PC-9 (cell line): ENCODE measurements at regions of chr11 and their contacts with region 1.

Region 1: DNA sequence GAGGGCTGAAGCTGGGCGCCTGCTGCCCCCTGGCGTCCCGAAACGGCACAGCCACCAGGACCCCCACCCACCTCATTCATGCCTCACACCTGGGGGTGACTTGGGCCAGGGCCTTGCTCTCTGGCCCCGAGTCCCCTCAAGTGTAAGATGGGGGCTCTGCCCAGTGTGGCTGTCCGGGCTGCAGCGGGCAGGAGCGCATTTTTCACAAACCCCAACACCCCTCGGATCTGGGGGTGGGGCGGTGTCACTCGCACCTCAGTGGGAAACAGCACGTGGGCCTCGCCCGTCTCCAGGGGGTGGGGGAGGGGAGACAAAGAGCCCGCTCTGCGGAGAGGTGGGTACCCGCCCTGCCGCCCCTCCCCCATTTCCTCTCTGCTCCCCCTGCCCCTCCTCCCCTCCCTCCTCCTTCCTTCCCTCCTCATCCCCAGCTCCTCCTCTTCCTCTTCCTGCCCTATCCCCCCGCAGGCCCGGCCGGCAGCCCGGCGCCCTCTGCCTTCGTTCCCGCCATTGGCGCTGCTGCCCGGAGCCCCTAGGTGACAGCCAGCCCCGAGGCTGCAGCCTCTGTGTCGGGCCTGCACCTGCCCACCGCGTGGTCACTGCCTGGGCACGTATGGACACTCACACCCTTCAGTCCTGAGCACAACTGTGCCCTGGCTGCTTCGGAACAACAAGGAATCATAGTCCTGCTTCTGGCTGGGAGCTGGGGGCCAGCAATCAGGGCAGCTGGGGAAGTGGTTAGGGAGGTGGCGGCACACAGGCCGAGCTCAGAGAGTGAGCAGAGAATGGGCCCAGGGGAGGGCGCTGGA is 6.8 kb upstream of the CDKN1C start:
- DNase-seq: peak; percentile 50 to 57
- H3K4me3 ChIP-seq: peak overlapping the region; percentile 62; the same call in 1 of the 2 replicates
- H3K27ac ChIP-seq: peak overlapping the region; percentile 63
- H3K4me1 ChIP-seq: peaks cover 8% of the 10 kb centered on the region; the same call in 1 of the 2 replicates
- H3K27me3 ChIP-seq: no peaks in the 10 kb centered on the region
- CTCF ChIP-seq: peak; percentile 91

Region 2: GRCh38 chr11:2428322-2428795 is 464.1 kb before region 1 on chr11:
- CTCF ChIA-PET with region 1: no interaction called
- POLR2A ChIA-PET with region 1: no interaction called
- intact Hi-C with region 1: loop called (anchors 2 kb)
- DNase-seq: peak in 1 of 2 experiments; percentile 54
- H3K4me3 ChIP-seq: no peak overlapping the region
- H3K27ac ChIP-seq: no peak overlapping the region
- H3K4me1 ChIP-seq: no peaks in the 10 kb centered on the region
- H3K27me3 ChIP-seq: peaks cover 27% of the 10 kb centered on the region
- CTCF ChIP-seq: peak; percentile 87